ENCODE measurements at regions of chr2 and their contacts with region 1.

Region 1: GRCh38 chr2:179422037-179422643 is 157.5 kb upstream of the SESTD1 start:
- DNase-seq: peak; percentile 58
- ATAC-seq: peak; percentile 61
- H3K4me3 ChIP-seq: no peak overlapping the region
- H3K4me3 Mint-ChIP-seq: no peak overlapping the region
- H3K27ac ChIP-seq: no peak overlapping the region
- H3K27ac Mint-ChIP-seq: no peak overlapping the region
- H3K4me1 ChIP-seq: no peaks in the 10 kb centered on the region
- H3K4me1 Mint-ChIP-seq: no peaks in the 10 kb centered on the region
- H3K27me3 ChIP-seq: no peaks in the 10 kb centered on the region
- H3K27me3 Mint-ChIP-seq: peaks cover 11% of the 10 kb centered on the region
- CTCF ChIP-seq: peak; percentile 77

Region 2: DNA sequence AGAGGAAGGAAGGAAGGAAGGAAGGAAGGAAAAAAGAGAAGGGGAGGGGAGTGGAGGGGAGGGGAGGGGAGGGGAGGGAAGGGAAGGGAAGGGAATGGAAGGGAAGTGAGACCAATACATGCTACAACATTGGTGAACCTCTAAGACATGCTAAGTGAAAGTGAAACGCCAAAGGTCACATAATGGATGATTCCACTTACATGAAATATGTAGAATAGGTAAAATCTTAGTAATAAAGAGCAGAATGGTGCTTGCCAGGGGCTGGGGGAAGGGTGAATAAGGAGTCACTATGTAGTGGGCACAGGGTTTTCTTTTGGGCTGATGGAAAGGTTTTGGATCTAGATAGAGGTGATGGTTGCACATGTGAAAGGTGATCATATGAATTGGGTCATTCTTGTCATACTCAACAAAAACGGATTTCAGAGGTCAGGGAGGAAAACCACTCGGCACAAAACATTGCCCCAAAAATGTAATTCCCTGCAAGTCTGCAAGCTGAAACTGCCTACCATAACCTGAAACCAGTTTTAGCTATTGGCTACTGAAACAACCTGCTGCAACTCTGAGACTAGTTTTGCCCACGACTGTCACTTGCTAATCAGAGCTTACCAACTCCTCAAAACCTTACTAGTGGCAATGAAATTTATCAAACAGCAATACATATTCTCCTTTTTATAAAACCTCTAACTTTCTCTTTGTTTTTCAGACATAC is 431.5 kb before region 1 on chr2:
- CTCF ChIA-PET with region 1: no interaction called
- POLR2A ChIA-PET with region 1: no interaction called
- intact Hi-C with region 1: no loop called
- DNase-seq: peak; percentile 10
- ATAC-seq: no peak
- H3K4me3 ChIP-seq: peak overlapping the region in 2 of 5 experiments; percentile 34 to 36
- H3K4me3 Mint-ChIP-seq: peak overlapping the region; percentile 72
- H3K27ac ChIP-seq: peak overlapping the region; percentile 27 to 57
- H3K27ac Mint-ChIP-seq: peak overlapping the region; percentile 69
- H3K4me1 ChIP-seq: peaks cover 5 to 6% of the 10 kb centered on the region in 2 donors
- H3K4me1 Mint-ChIP-seq: peaks cover 13% of the 10 kb centered on the region
- H3K27me3 ChIP-seq: no peaks in the 10 kb centered on the region
- H3K27me3 Mint-ChIP-seq: no peaks in the 10 kb centered on the region
- CTCF ChIP-seq: no peak

Region 3: DNA sequence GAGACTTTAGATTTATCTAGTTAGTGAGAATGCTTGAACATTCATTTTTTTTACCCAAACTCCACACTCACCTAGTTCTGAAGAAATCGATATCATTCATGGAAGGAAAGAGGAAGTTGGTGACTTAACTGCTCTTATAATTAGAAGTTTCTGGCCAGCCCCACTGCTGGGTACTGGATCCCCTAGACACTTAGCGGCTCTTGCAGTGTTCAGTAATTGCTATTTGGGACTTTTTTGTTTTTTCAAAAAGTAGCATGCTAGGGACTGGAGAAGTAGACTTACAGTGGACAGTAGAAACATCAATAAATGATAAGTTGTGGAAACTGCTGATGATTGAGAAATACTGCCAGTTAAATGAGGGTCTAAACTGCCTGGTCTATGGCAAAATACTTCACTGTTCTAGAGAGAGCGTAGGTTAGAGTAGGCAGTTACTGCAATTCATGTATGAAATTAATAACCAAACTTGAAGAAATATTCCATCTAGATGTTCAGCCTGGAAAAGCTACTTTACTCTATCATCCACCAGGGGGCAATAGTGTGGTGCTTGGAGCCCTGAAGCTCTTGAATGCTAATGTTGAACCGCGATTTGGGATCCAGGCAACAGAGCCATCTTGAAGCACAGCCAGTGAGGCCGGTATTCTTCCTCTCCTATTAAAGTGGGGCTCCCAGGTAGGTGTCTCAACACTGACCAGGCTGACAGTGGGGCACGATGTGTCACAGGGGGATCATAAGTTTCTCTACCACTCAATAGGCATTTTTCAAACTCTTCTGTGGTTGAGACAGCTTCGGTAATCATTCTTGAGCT is 11.4 kb before region 1 on chr2:
- CTCF ChIA-PET with region 1: interaction called, 28 read pairs
- POLR2A ChIA-PET with region 1: no interaction called
- intact Hi-C with region 1: no loop called
- DNase-seq: peak; percentile 47
- ATAC-seq: peak; percentile 45
- H3K4me3 ChIP-seq: no peak overlapping the region
- H3K4me3 Mint-ChIP-seq: no peak overlapping the region
- H3K27ac ChIP-seq: no peak overlapping the region
- H3K27ac Mint-ChIP-seq: no peak overlapping the region
- H3K4me1 ChIP-seq: peaks cover 7 to 8% of the 10 kb centered on the region in 2 donors
- H3K4me1 Mint-ChIP-seq: peaks cover 10% of the 10 kb centered on the region
- H3K27me3 ChIP-seq: peaks cover 0 to 13% (median 1%) of the 10 kb centered on the region in 4 experiments
- H3K27me3 Mint-ChIP-seq: peaks cover 35% of the 10 kb centered on the region
- CTCF ChIP-seq: peak; percentile 73

Region 4: DNA sequence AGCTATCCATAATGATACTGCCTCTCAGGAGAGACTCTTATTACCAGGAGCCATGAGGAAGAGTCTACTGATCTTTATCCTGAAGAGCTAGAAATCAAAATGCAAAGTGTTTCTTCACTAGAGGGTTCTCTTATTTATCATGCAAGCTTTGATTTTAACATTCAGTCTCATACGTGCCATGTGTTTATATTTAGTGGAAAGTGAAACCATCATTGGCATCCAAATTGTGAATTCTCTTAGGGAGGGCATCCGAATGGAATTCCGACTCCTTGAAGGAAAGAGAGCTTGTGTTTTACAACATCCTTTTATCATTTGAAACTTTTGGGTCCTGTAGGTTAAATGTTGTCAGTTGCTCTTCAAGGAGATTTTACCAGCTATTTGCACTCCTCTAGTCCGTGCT is 12.9 kb after region 1 on chr2:
- CTCF ChIA-PET with region 1: interaction called, 45 read pairs
- POLR2A ChIA-PET with region 1: no interaction called
- intact Hi-C with region 1: no loop called
- DNase-seq: no peak
- ATAC-seq: no peak
- H3K4me3 ChIP-seq: no peak overlapping the region
- H3K4me3 Mint-ChIP-seq: no peak overlapping the region
- H3K27ac ChIP-seq: no peak overlapping the region
- H3K27ac Mint-ChIP-seq: no peak overlapping the region
- H3K4me1 ChIP-seq: no peaks in the 10 kb centered on the region
- H3K4me1 Mint-ChIP-seq: no peaks in the 10 kb centered on the region
- H3K27me3 ChIP-seq: peaks cover 0 to 4% (median 0%) of the 10 kb centered on the region in 4 experiments
- H3K27me3 Mint-ChIP-seq: peaks cover 14% of the 10 kb centered on the region
- CTCF ChIP-seq: no peak

Region 5: DNA sequence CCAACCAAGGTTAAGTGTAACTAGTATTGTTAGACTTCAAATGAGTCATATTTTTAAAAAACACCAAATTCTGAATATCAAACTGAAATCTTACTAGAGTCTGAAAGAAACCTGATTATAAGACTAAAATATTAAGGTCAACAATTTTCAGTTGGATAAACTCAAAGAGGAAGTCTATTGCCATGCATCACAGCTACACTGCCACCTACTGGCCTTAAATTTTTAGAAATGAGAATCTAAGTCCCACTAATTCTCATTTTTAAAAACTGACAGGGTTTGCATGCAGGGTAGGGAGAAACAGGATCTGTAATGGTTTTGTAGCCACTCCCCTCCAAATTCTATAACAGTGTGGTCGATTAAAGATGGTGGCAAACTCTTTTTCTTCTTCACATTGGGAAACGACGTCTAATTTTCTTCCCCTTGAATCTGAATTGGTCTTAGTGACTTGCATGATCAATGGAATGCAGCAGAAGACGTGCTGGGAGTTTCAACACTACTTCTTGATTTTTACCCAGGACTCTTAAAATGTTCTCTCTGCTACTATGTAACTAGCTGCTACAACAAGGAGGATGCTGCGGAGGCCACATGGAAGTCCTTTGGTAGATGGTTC is 18.6 kb after region 1 on chr2:
- CTCF ChIA-PET with region 1: interaction called, 45 read pairs
- POLR2A ChIA-PET with region 1: no interaction called
- intact Hi-C with region 1: no loop called
- DNase-seq: peak; percentile 70
- ATAC-seq: no peak
- H3K4me3 ChIP-seq: no peak overlapping the region
- H3K4me3 Mint-ChIP-seq: no peak overlapping the region
- H3K27ac ChIP-seq: no peak overlapping the region
- H3K27ac Mint-ChIP-seq: no peak overlapping the region
- H3K4me1 ChIP-seq: no peaks in the 10 kb centered on the region
- H3K4me1 Mint-ChIP-seq: no peaks in the 10 kb centered on the region
- H3K27me3 ChIP-seq: peaks cover 0 to 8% (median 1%) of the 10 kb centered on the region in 4 experiments
- H3K27me3 Mint-ChIP-seq: peaks cover 30% of the 10 kb centered on the region
- CTCF ChIP-seq: peak; percentile 89

Region 6: DNA sequence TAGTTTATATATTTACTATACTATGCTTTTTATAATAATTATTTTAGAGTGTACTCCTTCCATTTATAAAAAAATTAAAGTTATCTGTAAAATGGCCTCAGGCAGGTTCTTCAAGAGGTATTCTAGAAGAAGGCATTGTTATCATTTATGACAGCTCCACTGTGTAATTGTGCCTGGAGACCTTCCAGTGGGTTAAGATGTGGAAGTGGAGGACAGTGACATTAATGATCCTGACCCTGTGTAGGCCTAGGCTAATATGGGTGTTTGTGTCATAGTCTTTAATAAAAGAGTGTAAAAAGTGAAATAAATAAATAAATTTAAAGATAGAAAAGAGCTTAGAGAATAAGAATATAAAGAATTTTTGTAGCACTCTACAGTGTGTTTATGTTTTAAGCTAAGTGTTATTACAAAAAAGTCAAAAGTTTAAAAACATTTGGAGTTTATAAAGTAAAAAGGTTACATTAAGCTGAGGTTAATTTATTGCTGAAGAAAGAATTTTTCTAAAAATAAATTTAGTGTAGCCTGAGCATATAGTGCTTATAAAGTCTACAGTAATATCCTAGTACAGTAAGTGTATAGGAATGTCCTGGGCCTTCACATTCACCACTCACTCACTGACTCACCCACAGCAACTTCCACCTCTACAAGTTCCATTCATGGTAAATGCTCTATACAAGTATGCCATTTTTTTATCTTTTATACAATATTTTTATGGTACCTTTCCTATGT is 32.5 kb after region 1 on chr2:
- CTCF ChIA-PET with region 1: no interaction called
- POLR2A ChIA-PET with region 1: no interaction called
- intact Hi-C with region 1: no loop called
- DNase-seq: no peak
- ATAC-seq: no peak
- H3K4me3 ChIP-seq: no peak overlapping the region
- H3K4me3 Mint-ChIP-seq: no peak overlapping the region
- H3K27ac ChIP-seq: no peak overlapping the region
- H3K27ac Mint-ChIP-seq: no peak overlapping the region
- H3K4me1 ChIP-seq: no peaks in the 10 kb centered on the region
- H3K4me1 Mint-ChIP-seq: no peaks in the 10 kb centered on the region
- H3K27me3 ChIP-seq: no peaks in the 10 kb centered on the region
- H3K27me3 Mint-ChIP-seq: peaks cover 5% of the 10 kb centered on the region
- CTCF ChIP-seq: no peak

Region 7: GRCh38 chr2:179467111-179467510 is 45.0 kb after region 1 on chr2:
- CTCF ChIA-PET with region 1: no interaction called
- POLR2A ChIA-PET with region 1: no interaction called
- intact Hi-C with region 1: no loop called
- DNase-seq: no peak
- ATAC-seq: no peak
- H3K4me3 ChIP-seq: no peak overlapping the region
- H3K4me3 Mint-ChIP-seq: no peak overlapping the region
- H3K27ac ChIP-seq: no peak overlapping the region
- H3K27ac Mint-ChIP-seq: no peak overlapping the region
- H3K4me1 ChIP-seq: no peaks in the 10 kb centered on the region
- H3K4me1 Mint-ChIP-seq: no peaks in the 10 kb centered on the region
- H3K27me3 ChIP-seq: peaks cover 0 to 4% (median 2%) of the 10 kb centered on the region in 4 experiments
- H3K27me3 Mint-ChIP-seq: peaks cover 30% of the 10 kb centered on the region
- CTCF ChIP-seq: no peak